Activated naive CD4-positive, alpha-beta T cell treated with anti-CD3 and anti-CD28 coated beads for 36 hours (primary cell): ENCODE measurements at regions of chr6 and their contacts with region 1.

Region 1: GRCh38 chr6:33547499-33547898 is 32.6 kb downstream of the BAK1 start:
- DNase-seq: no peak
- H3K4me3 Mint-ChIP-seq: no peak overlapping the region
- H3K27ac Mint-ChIP-seq: no peak overlapping the region
- H3K4me1 Mint-ChIP-seq: peaks cover 20% of the 10 kb centered on the region
- H3K27me3 Mint-ChIP-seq: no peaks in the 10 kb centered on the region

Region 2: DNA sequence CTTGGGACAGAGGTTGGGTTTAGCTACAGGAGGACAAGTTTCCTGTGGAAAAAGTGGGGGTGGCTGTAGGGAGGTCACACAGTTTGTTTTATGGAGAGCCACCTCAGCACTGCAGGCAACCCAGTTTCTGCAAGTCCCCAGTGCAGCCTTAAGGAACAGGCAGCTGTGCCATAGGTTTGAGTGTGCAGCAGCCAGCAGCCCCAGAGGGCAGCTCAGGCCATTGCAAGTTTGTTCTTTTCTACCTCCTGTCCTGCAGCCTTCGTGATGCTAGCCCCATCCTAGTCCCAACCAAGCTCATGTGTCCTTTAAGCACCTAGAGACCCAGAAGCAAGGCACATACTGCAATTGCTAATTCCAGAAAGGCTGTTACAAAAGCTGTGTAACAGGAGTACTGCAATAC is 34.3 kb before region 1 on chr6:
- CTCF ChIA-PET with region 1: no interaction called
- intact Hi-C with region 1: no loop called
- DNase-seq: no peak
- H3K4me3 Mint-ChIP-seq: no peak overlapping the region
- H3K27ac Mint-ChIP-seq: no peak overlapping the region
- H3K4me1 Mint-ChIP-seq: peaks cover 4% of the 10 kb centered on the region
- H3K27me3 Mint-ChIP-seq: peaks cover 12% of the 10 kb centered on the region

Region 3: DNA sequence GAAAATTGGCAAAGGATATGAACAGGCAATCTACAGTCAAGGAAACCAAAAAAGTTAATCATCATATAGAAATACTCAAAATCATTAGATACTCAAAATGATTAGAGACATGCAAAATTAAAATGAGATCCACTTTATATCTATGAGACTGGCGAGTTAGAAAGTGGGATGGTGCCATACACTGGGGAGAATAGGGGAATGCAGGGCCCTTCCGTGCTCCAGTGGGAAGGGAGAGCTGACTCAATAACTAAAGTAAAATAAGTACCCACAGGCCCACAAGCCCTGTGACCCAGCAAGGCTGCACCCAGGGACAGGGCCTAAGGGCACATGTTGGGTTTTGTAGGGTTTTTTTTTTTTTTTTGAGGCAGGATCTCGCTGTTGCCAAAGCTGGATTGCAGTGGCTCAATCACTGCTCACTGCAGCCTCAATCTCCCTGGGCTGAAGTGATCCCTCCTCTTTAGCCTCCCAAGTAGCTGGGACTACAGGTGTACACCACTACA is 12.3 kb before region 1 on chr6:
- CTCF ChIA-PET with region 1: interaction called, 4 read pairs
- intact Hi-C with region 1: loop called (anchors 1 kb)
- DNase-seq: no peak
- H3K4me3 Mint-ChIP-seq: no peak overlapping the region
- H3K27ac Mint-ChIP-seq: no peak overlapping the region
- H3K4me1 Mint-ChIP-seq: peaks cover 25% of the 10 kb centered on the region
- H3K27me3 Mint-ChIP-seq: no peaks in the 10 kb centered on the region